ENCODE measurements at regions of chr1 and their contacts with region 1.

Region 1: GRCh38 chr1:46340404-46341221 is at the start of gene NSUN4:
- DNase-seq: peak; percentile 66 to 96 (median 83)
- ATAC-seq: peak; percentile 85
- H3K4me3 ChIP-seq: peak within 1 kb of the TSS; percentile 90 to 98
- H3K4me3 Mint-ChIP-seq: peak within 1 kb of the TSS; percentile 99
- H3K27ac ChIP-seq: peak within 1 kb of the TSS; percentile 91 to 100
- H3K27ac Mint-ChIP-seq: peak within 1 kb of the TSS; percentile 99
- H3K4me1 ChIP-seq: peaks cover 14% of the 10 kb centered on the region
- H3K4me1 Mint-ChIP-seq: peaks cover 48% of the 10 kb centered on the region
- H3K27me3 ChIP-seq: no peaks in the 10 kb centered on the region
- H3K27me3 Mint-ChIP-seq: no peaks in the 10 kb centered on the region
- CTCF ChIP-seq: peak; percentile 63
- total RNA-seq, gene NSUN4: 31.0 to 35.0 TPM

Region 2: DNA sequence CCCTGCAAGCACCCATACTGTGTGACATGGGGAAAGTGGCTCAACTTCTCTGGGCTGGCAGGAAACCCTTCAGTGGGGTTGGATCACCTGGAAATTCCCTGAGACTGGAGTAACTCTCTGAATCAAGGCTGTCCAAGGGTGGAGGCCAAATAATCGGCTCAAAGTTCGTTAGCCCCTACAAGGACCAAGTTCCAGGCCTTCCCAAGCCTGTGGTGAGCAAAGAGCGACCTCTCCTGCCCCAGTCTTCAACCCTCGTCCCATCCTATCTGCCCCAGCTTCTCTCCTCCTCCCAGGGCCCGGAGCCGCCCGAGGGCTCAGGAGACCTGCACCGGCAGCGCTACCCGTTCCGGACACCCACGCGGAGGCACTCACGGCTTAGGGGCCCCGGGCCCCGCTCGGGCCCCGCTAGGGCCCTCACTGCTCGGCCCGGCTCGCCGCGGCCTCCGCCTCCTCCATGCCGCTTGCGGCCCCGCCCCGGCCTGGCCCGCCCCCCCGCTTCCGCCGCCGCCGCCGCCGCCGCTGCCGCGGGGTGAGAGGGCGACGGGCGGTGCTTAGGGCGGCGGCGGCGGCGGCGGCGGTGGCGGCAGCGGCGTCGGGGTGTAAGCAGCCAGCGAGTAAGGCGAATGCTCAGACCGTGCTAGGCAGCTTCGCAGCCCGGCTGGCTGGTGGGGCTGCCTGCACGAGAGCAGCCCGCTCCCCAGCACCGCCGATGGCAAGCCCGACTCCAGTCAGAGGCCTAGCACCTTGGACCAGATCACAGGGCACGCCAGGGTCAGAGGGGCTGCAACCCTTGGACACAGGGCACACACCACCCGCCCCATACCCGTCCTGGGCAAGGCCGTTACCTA is 142.4 kb before region 1 on chr1 and contains the start of gene POMGNT1:
- CTCF ChIA-PET with region 1: no interaction called
- POLR2A ChIA-PET with region 1: no interaction called
- intact Hi-C with region 1: loop called in 1 of 2 experiments (anchors 5 kb)
- DNase-seq: peak; percentile 50 to 86 (median 72)
- ATAC-seq: peak; percentile 93
- H3K4me3 ChIP-seq: peak within 1 kb of the TSS; percentile 75 to 93
- H3K4me3 Mint-ChIP-seq: peak within 1 kb of the TSS; percentile 83
- H3K27ac ChIP-seq: peak within 1 kb of the TSS; percentile 58 to 59
- H3K27ac Mint-ChIP-seq: peak within 1 kb of the TSS; percentile 88
- H3K4me1 ChIP-seq: peaks cover 20% of the 10 kb centered on the region
- H3K4me1 Mint-ChIP-seq: peaks cover 32% of the 10 kb centered on the region
- H3K27me3 ChIP-seq: peaks cover 0 to 3% of the 10 kb centered on the region in 2 experiments
- H3K27me3 Mint-ChIP-seq: no peaks in the 10 kb centered on the region
- CTCF ChIP-seq: no peak
- total RNA-seq, gene POMGNT1: 20.3 to 23.4 TPM

Region 3: DNA sequence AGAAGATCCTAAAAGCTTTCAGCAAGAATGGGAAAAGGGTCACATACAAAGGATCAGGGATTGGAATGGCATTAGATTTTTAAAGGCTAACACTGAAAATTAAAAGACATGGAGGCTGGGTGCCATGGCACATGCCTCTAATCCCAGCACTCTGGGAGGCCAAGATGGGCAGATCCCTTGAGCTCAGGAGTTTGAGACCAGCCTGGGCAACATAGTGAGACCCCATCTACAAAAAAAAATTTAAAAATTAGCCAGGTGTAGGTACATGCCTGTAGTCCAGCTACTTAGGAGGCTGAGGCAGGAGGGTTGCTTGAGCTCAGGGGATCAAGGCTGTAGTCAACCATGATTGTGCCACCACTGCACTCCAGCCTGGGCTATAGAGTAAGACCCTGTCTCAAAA is 125.1 kb before region 1 on chr1:
- CTCF ChIA-PET with region 1: no interaction called
- POLR2A ChIA-PET with region 1: no interaction called
- intact Hi-C with region 1: no loop called
- DNase-seq: no peak
- ATAC-seq: no peak
- H3K4me3 ChIP-seq: no peak overlapping the region
- H3K4me3 Mint-ChIP-seq: no peak overlapping the region
- H3K27ac ChIP-seq: no peak overlapping the region
- H3K27ac Mint-ChIP-seq: no peak overlapping the region
- H3K4me1 ChIP-seq: no peaks in the 10 kb centered on the region
- H3K4me1 Mint-ChIP-seq: no peaks in the 10 kb centered on the region
- H3K27me3 ChIP-seq: peaks cover 0 to 4% of the 10 kb centered on the region in 2 experiments
- H3K27me3 Mint-ChIP-seq: no peaks in the 10 kb centered on the region
- CTCF ChIP-seq: no peak

Region 4: GRCh38 chr1:46285730-46286477 is 54.7 kb before region 1 on chr1:
- CTCF ChIA-PET with region 1: no interaction called
- POLR2A ChIA-PET with region 1: no interaction called
- intact Hi-C with region 1: loop called in 1 of 2 experiments (anchors 5 kb)
- DNase-seq: peak in 6 of 9 experiments; percentile 15 to 61 (median 46)
- ATAC-seq: peak; percentile 80
- H3K4me3 ChIP-seq: no peak overlapping the region
- H3K4me3 Mint-ChIP-seq: no peak overlapping the region
- H3K27ac ChIP-seq: no peak overlapping the region
- H3K27ac Mint-ChIP-seq: peak overlapping the region; percentile 45
- H3K4me1 ChIP-seq: peaks cover 9% of the 10 kb centered on the region
- H3K4me1 Mint-ChIP-seq: peaks cover 18% of the 10 kb centered on the region
- H3K27me3 ChIP-seq: no peaks in the 10 kb centered on the region
- H3K27me3 Mint-ChIP-seq: no peaks in the 10 kb centered on the region
- CTCF ChIP-seq: no peak

Region 5: DNA sequence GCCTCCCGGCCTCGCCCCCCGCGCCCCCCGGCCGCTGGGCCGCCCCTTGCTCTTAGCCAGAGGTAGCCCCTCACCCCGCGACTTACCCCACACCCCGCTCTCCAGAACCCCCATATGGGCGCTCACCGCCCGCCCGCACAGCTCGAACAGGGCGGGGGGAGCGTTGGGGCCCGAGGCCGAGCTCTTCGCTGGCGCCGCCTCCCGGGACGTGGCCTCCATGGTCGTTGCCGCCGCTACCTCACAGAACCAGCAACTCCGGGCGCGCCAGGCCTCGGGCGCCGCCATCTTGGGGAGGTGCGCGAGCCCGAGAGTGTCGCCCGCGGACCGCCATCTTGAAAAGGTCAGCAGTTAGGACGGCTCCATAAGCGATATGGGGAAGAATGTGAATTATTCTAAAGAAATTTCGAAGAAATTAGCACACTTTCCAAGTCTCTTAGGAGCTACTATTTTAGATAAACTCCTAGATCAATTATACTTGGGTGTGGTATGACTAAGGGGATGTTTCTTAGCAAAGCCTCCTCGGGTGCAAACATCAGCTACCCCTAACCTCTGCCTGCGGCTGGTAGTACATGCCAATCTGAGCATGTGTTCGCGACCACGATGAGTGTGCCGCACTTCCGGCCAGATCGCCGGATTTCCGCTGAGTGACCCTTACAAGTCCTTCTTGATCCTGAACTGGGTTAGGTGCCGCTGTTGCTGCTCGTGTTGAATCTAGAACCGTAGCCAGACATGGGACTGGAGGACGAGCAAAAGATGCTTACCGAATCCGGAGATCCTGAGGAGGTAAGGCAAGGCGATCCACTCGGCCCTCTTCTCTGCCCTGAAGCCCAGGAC is 37.4 kb before region 1 on chr1 and contains the starts of genes LRRC41 and UQCRH:
- CTCF ChIA-PET with region 1: interaction called, 6 read pairs
- POLR2A ChIA-PET with region 1: interaction called, 16 read pairs
- intact Hi-C with region 1: loop called (anchors 1 kb)
- DNase-seq: peak; percentile 90 to 96 (median 92)
- ATAC-seq: peak; percentile 87
- H3K4me3 ChIP-seq: peak within 1 kb of the TSS; percentile 81 to 88
- H3K4me3 Mint-ChIP-seq: peak within 1 kb of the TSS; percentile 97
- H3K27ac ChIP-seq: peak within 1 kb of the TSS; percentile 84 to 89
- H3K27ac Mint-ChIP-seq: peak within 1 kb of the TSS; percentile 96
- H3K4me1 ChIP-seq: peaks cover 44% of the 10 kb centered on the region
- H3K4me1 Mint-ChIP-seq: peaks cover 55% of the 10 kb centered on the region
- H3K27me3 ChIP-seq: no peaks in the 10 kb centered on the region
- H3K27me3 Mint-ChIP-seq: no peaks in the 10 kb centered on the region
- CTCF ChIP-seq: no peak
- total RNA-seq, gene LRRC41: 25.5 to 27.1 TPM
- total RNA-seq, gene UQCRH: 100 to 118 TPM

Region 6: DNA sequence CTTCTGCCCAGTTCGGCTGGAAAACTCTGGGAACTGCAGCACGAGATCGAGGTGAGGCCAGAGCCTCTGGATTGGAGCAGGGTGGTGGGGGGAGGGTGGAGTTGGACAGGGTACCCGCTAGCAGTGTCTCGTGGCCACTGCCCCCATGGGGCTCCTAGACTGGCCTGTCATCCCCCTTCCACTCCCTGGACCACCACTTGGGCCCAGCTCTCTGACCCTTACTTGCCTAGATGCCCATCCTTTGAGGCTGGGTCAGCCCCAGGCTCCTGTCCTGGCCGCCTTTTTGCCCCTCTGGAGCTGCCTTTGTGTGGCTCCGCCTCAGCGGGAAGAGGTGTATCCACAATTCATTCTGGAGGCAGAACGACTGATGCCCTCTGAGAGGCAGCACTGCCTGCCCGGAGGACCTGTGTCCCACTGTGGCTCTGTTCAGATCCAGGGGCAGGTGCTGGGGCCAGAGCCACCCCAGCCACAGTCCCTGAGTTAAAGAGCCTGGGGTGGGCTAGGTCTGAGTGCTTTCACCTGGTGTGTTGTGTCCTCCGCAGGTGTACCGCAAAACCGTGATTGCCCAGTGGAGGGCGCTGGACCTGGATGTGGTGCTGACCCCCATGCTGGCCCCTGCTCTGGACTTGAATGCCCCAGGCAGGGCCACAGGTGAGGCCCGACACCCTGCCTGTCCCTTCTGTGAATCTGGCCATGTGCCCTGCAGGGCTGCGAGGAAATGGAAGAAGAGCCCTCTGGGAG is 71.2 kb after region 1 on chr1:
- CTCF ChIA-PET with region 1: no interaction called
- POLR2A ChIA-PET with region 1: no interaction called
- intact Hi-C with region 1: no loop called
- DNase-seq: peak in 1 of 9 experiments; percentile 13
- ATAC-seq: no peak
- H3K4me3 ChIP-seq: no peak overlapping the region
- H3K4me3 Mint-ChIP-seq: no peak overlapping the region
- H3K27ac ChIP-seq: no peak overlapping the region
- H3K27ac Mint-ChIP-seq: no peak overlapping the region
- H3K4me1 ChIP-seq: no peaks in the 10 kb centered on the region
- H3K4me1 Mint-ChIP-seq: peaks cover 4% of the 10 kb centered on the region
- H3K27me3 ChIP-seq: no peaks in the 10 kb centered on the region
- H3K27me3 Mint-ChIP-seq: no peaks in the 10 kb centered on the region
- CTCF ChIP-seq: peak; percentile 43

Region 7: GRCh38 chr1:46603858-46604549 is 263.4 kb after region 1 on chr1 and contains the start of gene MKNK1:
- CTCF ChIA-PET with region 1: no interaction called
- POLR2A ChIA-PET with region 1: no interaction called
- intact Hi-C with region 1: no loop called
- DNase-seq: peak; percentile 94 to 99 (median 99)
- ATAC-seq: peak; percentile 98
- H3K4me3 ChIP-seq: peak within 1 kb of the TSS; percentile 91 to 98
- H3K4me3 Mint-ChIP-seq: peak within 1 kb of the TSS; percentile 92
- H3K27ac ChIP-seq: peak within 1 kb of the TSS; percentile 73 to 79
- H3K27ac Mint-ChIP-seq: peak within 1 kb of the TSS; percentile 92
- H3K4me1 ChIP-seq: peaks cover 43% of the 10 kb centered on the region
- H3K4me1 Mint-ChIP-seq: peaks cover 65% of the 10 kb centered on the region
- H3K27me3 ChIP-seq: no peaks in the 10 kb centered on the region
- H3K27me3 Mint-ChIP-seq: no peaks in the 10 kb centered on the region
- CTCF ChIP-seq: no peak
- total RNA-seq, gene MKNK1: 30.3 to 30.6 TPM

Region 8: GRCh38 chr1:46667782-46668760 is 327.5 kb after region 1 on chr1 and contains the start of gene ATPAF1:
- CTCF ChIA-PET with region 1: no interaction called
- POLR2A ChIA-PET with region 1: no interaction called
- intact Hi-C with region 1: loop called in 1 of 2 experiments (anchors 2 kb)
- DNase-seq: peak; percentile 15 to 79 (median 49)
- ATAC-seq: peak; percentile 91
- H3K4me3 ChIP-seq: peak within 1 kb of the TSS; percentile 52 to 77
- H3K4me3 Mint-ChIP-seq: no peak within 1 kb of the TSS
- H3K27ac ChIP-seq: peak within 1 kb of the TSS; percentile 49 to 66
- H3K27ac Mint-ChIP-seq: peak within 1 kb of the TSS; percentile 69
- H3K4me1 ChIP-seq: peaks cover 22% of the 10 kb centered on the region
- H3K4me1 Mint-ChIP-seq: peaks cover 29% of the 10 kb centered on the region
- H3K27me3 ChIP-seq: no peaks in the 10 kb centered on the region
- H3K27me3 Mint-ChIP-seq: no peaks in the 10 kb centered on the region
- CTCF ChIP-seq: no peak
- total RNA-seq, gene ATPAF1: 8.3 to 10.5 TPM

Measured in CD8-positive, alpha-beta T cell (primary cell).